ENCODE measurements at regions of chr5 and their contacts with region 1.

Region 1: GRCh38 chr5:151115274-151115905 is 34.6 kb upstream of the TNIP1 start:
- DNase-seq: peak; percentile 78
- H3K4me3 Mint-ChIP-seq: no peak overlapping the region
- H3K27ac Mint-ChIP-seq: no peak overlapping the region
- H3K4me1 Mint-ChIP-seq: no peaks in the 10 kb centered on the region
- H3K27me3 Mint-ChIP-seq: no peaks in the 10 kb centered on the region
- CTCF ChIP-seq: peak; percentile 99

Region 2: DNA sequence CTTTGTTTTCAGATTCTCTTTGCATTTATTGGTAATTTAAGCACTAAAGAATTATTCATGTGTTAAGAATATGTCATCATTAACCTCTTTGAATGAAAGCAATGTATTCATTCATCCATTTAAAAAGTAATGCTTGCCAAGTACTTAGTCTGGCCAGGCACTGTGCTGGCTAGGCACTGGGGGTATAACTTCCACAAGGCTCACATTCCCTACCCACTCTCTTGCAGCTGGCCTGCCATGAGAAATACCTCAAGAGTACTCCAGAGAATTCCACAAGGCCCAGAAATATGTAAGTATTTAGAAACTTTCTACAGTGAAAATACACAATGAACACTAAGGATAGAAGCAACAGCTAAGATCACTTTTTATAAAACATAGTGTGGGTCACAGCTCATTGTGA is 236.0 kb before region 1 on chr5:
- CTCF ChIA-PET with region 1: no interaction called
- POLR2A ChIA-PET with region 1: no interaction called
- intact Hi-C with region 1: no loop called
- DNase-seq: no peak
- H3K4me3 Mint-ChIP-seq: no peak overlapping the region
- H3K27ac Mint-ChIP-seq: no peak overlapping the region
- H3K4me1 Mint-ChIP-seq: no peaks in the 10 kb centered on the region
- H3K27me3 Mint-ChIP-seq: no peaks in the 10 kb centered on the region
- CTCF ChIP-seq: no peak

Region 3: DNA sequence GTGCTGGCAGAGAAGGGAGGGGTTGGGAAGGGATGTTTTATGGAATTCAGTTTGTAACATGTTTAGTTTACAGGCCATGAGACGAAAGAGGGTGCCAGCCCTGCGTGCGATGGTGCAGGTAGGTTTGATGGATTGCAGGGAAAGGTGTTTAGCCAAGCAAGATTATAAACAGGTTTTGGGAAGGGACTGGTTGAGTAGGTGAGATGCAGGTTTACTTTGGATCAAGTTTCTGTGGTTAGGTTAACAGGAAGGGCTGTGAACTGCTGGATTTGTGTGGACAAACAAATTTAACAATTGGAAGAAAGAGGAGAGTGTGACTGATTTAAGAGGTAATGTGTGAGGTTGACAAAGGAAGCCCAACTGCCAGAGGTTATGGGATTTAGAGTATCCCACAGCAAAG is 127.6 kb before region 1 on chr5:
- CTCF ChIA-PET with region 1: interaction called, 394 read pairs
- POLR2A ChIA-PET with region 1: no interaction called
- intact Hi-C with region 1: no loop called
- DNase-seq: no peak
- H3K4me3 Mint-ChIP-seq: no peak overlapping the region
- H3K27ac Mint-ChIP-seq: no peak overlapping the region
- H3K4me1 Mint-ChIP-seq: no peaks in the 10 kb centered on the region
- H3K27me3 Mint-ChIP-seq: no peaks in the 10 kb centered on the region
- CTCF ChIP-seq: no peak

Region 4: GRCh38 chr5:151020304-151021110 is 94.9 kb before region 1 on chr5 and contains the start of gene GPX3:
- CTCF ChIA-PET with region 1: interaction called, 35 read pairs
- POLR2A ChIA-PET with region 1: no interaction called
- intact Hi-C with region 1: no loop called
- DNase-seq: no peak
- H3K4me3 Mint-ChIP-seq: no peak within 1 kb of the TSS
- H3K27ac Mint-ChIP-seq: peak within 1 kb of the TSS; percentile 28
- H3K4me1 Mint-ChIP-seq: peaks cover 39% of the 10 kb centered on the region
- H3K27me3 Mint-ChIP-seq: no peaks in the 10 kb centered on the region
- CTCF ChIP-seq: no peak
- total RNA-seq, gene GPX3: not detected in 2 replicates

Region 5: DNA sequence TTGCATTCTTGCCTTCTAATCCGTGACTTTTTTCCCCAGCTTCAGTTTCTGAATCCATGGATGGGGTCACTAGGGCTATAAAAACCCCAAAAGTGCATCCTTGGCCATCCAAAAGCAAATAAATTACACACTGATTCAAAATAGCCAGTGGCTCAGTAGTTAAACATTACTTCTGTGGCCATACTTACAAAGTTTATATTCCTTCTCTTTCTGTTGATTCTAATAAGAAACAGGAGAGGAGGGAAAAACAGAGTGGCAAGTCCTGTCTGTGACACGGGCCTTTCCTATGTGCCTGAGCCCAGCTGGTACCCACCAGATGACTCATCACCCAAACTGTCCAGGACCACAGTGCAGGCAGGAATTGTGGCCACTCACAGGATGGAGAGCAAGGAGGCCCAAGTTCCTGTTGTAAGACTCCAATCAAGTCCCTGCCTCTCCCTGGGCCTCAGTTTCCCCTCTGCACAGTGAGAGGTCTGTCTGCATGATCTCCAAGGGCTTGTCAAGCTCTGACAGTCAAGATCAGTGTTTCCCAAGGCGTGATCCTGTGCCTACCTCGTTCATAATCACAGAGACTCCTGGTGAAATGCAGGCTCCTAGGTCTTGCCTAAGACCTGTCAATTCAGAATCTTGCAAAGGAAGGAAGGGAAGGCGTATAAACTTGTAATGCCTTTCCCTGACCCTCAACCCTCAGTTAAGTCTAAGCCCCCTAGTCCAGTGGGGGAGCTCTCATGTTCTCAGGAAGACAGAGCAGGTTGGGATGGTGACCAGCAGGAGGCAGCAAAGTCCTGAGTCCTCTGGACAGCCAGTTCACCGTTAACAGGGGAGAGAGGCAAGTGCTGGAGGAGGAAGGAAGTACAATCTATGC is 64.1 kb before region 1 on chr5:
- CTCF ChIA-PET with region 1: interaction called, 1,587 read pairs
- POLR2A ChIA-PET with region 1: interaction called, 10 read pairs
- intact Hi-C with region 1: loop called (anchors 1 kb)
- DNase-seq: peak; percentile 83
- H3K4me3 Mint-ChIP-seq: no peak overlapping the region
- H3K27ac Mint-ChIP-seq: peak overlapping the region; percentile 62
- H3K4me1 Mint-ChIP-seq: no peaks in the 10 kb centered on the region
- H3K27me3 Mint-ChIP-seq: no peaks in the 10 kb centered on the region
- CTCF ChIP-seq: peak; percentile 89

Region 6: GRCh38 chr5:151098499-151099121 is 16.8 kb before region 1 on chr5:
- CTCF ChIA-PET with region 1: interaction called, 72 read pairs
- POLR2A ChIA-PET with region 1: interaction called, 5 read pairs
- intact Hi-C with region 1: no loop called
- DNase-seq: no peak
- H3K4me3 Mint-ChIP-seq: no peak overlapping the region
- H3K27ac Mint-ChIP-seq: no peak overlapping the region
- H3K4me1 Mint-ChIP-seq: peaks cover 23% of the 10 kb centered on the region
- H3K27me3 Mint-ChIP-seq: no peaks in the 10 kb centered on the region
- CTCF ChIP-seq: no peak

Region 7: GRCh38 chr5:151223469-151224264 is 108.3 kb after region 1 on chr5 and contains the start of gene CCDC69:
- CTCF ChIA-PET with region 1: interaction called, 17 read pairs
- POLR2A ChIA-PET with region 1: no interaction called
- intact Hi-C with region 1: no loop called
- DNase-seq: peak; percentile 74
- H3K4me3 Mint-ChIP-seq: peak within 1 kb of the TSS; percentile 84
- H3K27ac Mint-ChIP-seq: peak within 1 kb of the TSS; percentile 75
- H3K4me1 Mint-ChIP-seq: peaks cover 18% of the 10 kb centered on the region
- H3K27me3 Mint-ChIP-seq: no peaks in the 10 kb centered on the region
- CTCF ChIP-seq: no peak
- total RNA-seq, gene CCDC69: 2.8 and 3.0 TPM in 2 replicates

Region 8: GRCh38 chr5:151315998-151316597 is 200.7 kb after region 1 on chr5:
- CTCF ChIA-PET with region 1: interaction called, 12 read pairs
- POLR2A ChIA-PET with region 1: no interaction called
- intact Hi-C with region 1: no loop called
- DNase-seq: peak; percentile 88
- H3K4me3 Mint-ChIP-seq: no peak overlapping the region
- H3K27ac Mint-ChIP-seq: no peak overlapping the region
- H3K4me1 Mint-ChIP-seq: no peaks in the 10 kb centered on the region
- H3K27me3 Mint-ChIP-seq: peaks cover 13% of the 10 kb centered on the region
- CTCF ChIP-seq: peak; percentile 97

Measured in MCF 10A (cell line).